Mammary epithelial cell (primary cell): ENCODE measurements at regions of chr11 and their contacts with region 1.

Region 1: GRCh38 chr11:8631395-8632118 is 37.5 kb upstream of the STK33 start:
- DNase-seq: peak; percentile 62
- H3K4me3 ChIP-seq: no peak overlapping the region
- H3K27ac ChIP-seq: no peak overlapping the region
- H3K4me1 ChIP-seq: peaks cover 14% of the 10 kb centered on the region
- H3K27me3 ChIP-seq: no peaks in the 10 kb centered on the region
- CTCF ChIP-seq: no peak

Region 2: GRCh38 chr11:8577791-8578581 is 53.6 kb before region 1 on chr11:
- CTCF ChIA-PET with region 1: interaction called, 11 read pairs
- dilution Hi-C with region 1: no loop called
- in situ Hi-C with region 1: no loop called
- intact Hi-C with region 1: no loop called
- DNase-seq: peak; percentile 49
- H3K4me3 ChIP-seq: no peak overlapping the region
- H3K27ac ChIP-seq: no peak overlapping the region
- H3K4me1 ChIP-seq: no peaks in the 10 kb centered on the region
- H3K27me3 ChIP-seq: no peaks in the 10 kb centered on the region
- CTCF ChIP-seq: no peak

Region 3: GRCh38 chr11:8593935-8594909 is 37.3 kb before region 1 on chr11 and contains the start of gene STK33:
- CTCF ChIA-PET with region 1: no interaction called
- dilution Hi-C with region 1: no loop called
- in situ Hi-C with region 1: no loop called
- intact Hi-C with region 1: no loop called
- DNase-seq: no peak
- H3K4me3 ChIP-seq: peak within 1 kb of the TSS; percentile 16 to 44 (median 42)
- H3K27ac ChIP-seq: no peak within 1 kb of the TSS
- H3K4me1 ChIP-seq: peaks cover 6% of the 10 kb centered on the region
- H3K27me3 ChIP-seq: no peaks in the 10 kb centered on the region
- CTCF ChIP-seq: no peak
- total RNA-seq, gene STK33: 0.17 TPM in 1 of 2 donors, not detected in the other